PC-9 (cell line): ENCODE measurements at regions of chr4 and their contacts with region 1.

Region 1: GRCh38 chr4:187940299-187940698 is 55.3 kb upstream of the ZFP42 start:
- DNase-seq: no peak
- H3K4me3 ChIP-seq: no peak overlapping the region
- H3K27ac ChIP-seq: no peak overlapping the region
- H3K4me1 ChIP-seq: no peaks in the 10 kb centered on the region
- H3K27me3 ChIP-seq: peaks cover 21% of the 10 kb centered on the region; the same call in 1 of the 2 replicates
- CTCF ChIP-seq: no peak

Region 2: GRCh38 chr4:186617921-186618320 is 1322.4 kb before region 1 on chr4:
- CTCF ChIA-PET with region 1: no interaction called
- POLR2A ChIA-PET with region 1: no interaction called
- intact Hi-C with region 1: no loop called
- DNase-seq: no peak
- H3K4me3 ChIP-seq: no peak overlapping the region
- H3K27ac ChIP-seq: no peak overlapping the region
- H3K4me1 ChIP-seq: no peaks in the 10 kb centered on the region
- H3K27me3 ChIP-seq: no peaks in the 10 kb centered on the region
- CTCF ChIP-seq: no peak

Region 3: DNA sequence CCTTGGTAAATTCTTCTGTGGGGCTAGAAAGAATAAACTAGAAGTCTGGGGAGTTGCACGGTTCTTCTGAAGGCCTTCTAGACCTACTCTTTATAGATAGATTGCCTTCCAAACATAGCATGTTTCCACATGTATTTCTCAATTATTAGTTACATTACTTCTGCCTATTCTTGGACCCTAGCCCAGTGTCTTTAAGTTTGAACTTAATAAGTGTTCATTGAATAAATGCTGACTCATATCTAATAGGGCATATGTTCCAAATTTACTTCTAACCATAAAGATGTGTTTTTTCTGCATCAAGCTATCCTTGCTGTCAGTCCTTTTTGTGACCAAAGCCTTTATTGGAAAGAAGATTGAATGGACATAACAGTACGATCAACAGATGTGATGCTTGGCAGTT is 448.3 kb before region 1 on chr4:
- CTCF ChIA-PET with region 1: no interaction called
- POLR2A ChIA-PET with region 1: no interaction called
- intact Hi-C with region 1: loop called (anchors 5 kb)
- DNase-seq: no peak
- H3K4me3 ChIP-seq: no peak overlapping the region
- H3K27ac ChIP-seq: no peak overlapping the region
- H3K4me1 ChIP-seq: no peaks in the 10 kb centered on the region
- H3K27me3 ChIP-seq: no peaks in the 10 kb centered on the region
- CTCF ChIP-seq: no peak